Endothelial cell of umbilical vein (primary cell): ENCODE measurements at regions of chr12 and their contacts with region 1.

Region 1: GRCh38 chr12:40117818-40118217 is 11.9 kb upstream of the SLC2A13 start:
- DNase-seq: no peak
- H3K4me3 ChIP-seq: no peak overlapping the region
- H3K27ac ChIP-seq: no peak overlapping the region
- H3K4me1 ChIP-seq: no peaks in the 10 kb centered on the region
- H3K27me3 ChIP-seq: peaks cover 0 to 5% of the 10 kb centered on the region in 2 experiments
- CTCF ChIP-seq: no peak
- POLR2A ChIP-seq: no peak

Region 2: GRCh38 chr12:40045656-40046055 is 72.2 kb before region 1 on chr12:
- CTCF ChIA-PET with region 1: no interaction called
- POLR2A ChIA-PET with region 1: no interaction called
- dilution Hi-C with region 1: no loop called
- intact Hi-C with region 1: no loop called
- DNase-seq: no peak
- H3K4me3 ChIP-seq: no peak overlapping the region
- H3K27ac ChIP-seq: no peak overlapping the region
- H3K4me1 ChIP-seq: no peaks in the 10 kb centered on the region
- H3K27me3 ChIP-seq: no peaks in the 10 kb centered on the region
- CTCF ChIP-seq: no peak
- POLR2A ChIP-seq: no peak

Region 3: DNA sequence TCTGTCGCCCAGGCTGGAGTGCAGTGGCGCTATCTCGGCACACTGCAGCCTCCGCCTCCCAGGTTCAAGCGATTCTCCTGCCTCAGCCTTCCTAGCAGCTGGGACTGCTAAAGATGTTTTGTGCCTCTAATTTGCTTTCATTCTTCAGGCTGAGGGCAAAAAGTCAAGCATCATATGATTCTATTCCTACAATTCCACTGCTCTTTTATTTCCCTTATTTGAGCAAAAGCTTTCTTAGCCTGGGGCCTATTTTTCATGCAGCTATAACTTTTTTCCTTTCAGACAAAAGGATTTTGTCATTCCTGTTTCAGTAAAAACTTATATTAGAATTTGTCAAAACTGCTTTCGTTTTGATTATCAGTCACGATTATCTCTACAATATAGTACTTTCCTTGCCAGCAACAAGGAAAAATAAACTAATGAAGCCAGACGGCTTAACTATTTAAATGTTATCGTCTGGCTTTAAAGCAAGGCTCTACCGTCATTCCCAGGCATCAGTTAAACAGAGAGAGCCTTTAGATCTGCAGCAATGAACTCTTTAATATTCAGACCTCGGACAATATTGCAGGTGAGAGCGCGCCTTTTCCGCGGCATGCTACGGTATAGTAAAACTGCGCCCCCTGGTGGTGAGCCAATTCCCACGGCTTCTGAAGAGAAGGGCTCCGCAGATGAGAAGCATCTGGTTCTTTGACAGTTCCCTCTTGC is 10.6 kb before region 1 on chr12:
- CTCF ChIA-PET with region 1: interaction called, 19 read pairs
- POLR2A ChIA-PET with region 1: no interaction called
- dilution Hi-C with region 1: no loop called
- intact Hi-C with region 1: no loop called
- DNase-seq: peak; percentile 72
- H3K4me3 ChIP-seq: peak overlapping the region in 2 of 3 experiments; percentile 17 to 67
- H3K27ac ChIP-seq: no peak overlapping the region
- H3K4me1 ChIP-seq: peaks cover 14% of the 10 kb centered on the region
- H3K27me3 ChIP-seq: no peaks in the 10 kb centered on the region
- CTCF ChIP-seq: peak; percentile 85 to 92
- POLR2A ChIP-seq: no peak